PC-3 (cell line): ENCODE measurements at regions of chr14 and their contacts with region 1.

Region 1: DNA sequence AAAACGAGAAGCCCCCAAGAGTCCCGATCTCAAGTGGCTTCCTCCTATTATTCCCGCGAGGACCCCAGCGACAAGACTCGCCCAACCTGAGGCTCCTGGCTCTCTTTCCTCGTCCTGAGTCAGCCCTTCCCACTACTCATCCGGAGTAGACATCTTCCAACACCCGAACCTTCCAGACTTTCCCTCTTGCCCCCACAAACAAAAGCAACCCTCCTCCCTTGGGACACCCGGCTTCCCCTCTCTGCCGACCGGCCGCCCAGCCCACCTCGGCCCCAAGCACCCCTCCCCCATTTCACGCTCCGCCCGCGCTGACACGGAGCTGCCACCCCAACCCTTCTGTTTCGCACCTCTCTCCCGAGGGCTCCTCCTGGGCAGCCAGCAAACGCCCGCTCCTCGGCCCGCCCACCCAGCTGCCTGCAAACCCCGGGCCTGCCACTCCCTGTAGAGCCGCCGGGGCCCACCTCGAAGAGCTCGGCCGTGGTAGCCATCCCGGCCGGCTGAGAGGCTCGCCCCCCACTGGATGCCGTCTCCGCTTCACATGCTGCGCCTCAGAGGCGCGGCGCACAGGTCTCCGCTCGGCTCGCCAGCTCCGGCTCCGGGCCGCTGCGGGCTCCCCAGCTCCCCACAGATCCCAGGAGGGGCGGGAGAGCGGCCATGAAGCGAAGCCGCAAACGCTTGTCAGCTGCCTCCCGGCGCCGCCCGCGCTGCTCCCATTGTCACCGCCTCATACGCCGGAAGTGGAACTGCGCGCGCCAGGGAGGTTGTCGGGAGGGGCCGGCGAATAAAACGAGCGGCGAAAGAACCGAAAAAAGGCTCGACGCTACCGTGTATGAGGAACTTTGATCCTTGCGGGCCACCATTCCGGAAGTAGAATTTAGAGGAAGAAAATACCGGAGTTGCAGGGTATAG is at the starts of genes AP5M1 and EXOC5:
- DNase-seq: peak; percentile 100
- ATAC-seq: peak; percentile 81
- H3K4me3 ChIP-seq: peak within 1 kb of the TSS; percentile 77
- H3K27ac ChIP-seq: peak within 1 kb of the TSS; percentile 73
- H3K4me1 ChIP-seq: peaks cover 40% of the 10 kb centered on the region
- H3K27me3 ChIP-seq: no peaks in the 10 kb centered on the region
- CTCF ChIP-seq: peak; percentile 21; the same call in 1 of the 2 replicates
- total RNA-seq, gene AP5M1: 41.3 and 48.7 TPM in 2 replicates
- total RNA-seq, gene EXOC5: 109 TPM in 2 replicates

Region 2: DNA sequence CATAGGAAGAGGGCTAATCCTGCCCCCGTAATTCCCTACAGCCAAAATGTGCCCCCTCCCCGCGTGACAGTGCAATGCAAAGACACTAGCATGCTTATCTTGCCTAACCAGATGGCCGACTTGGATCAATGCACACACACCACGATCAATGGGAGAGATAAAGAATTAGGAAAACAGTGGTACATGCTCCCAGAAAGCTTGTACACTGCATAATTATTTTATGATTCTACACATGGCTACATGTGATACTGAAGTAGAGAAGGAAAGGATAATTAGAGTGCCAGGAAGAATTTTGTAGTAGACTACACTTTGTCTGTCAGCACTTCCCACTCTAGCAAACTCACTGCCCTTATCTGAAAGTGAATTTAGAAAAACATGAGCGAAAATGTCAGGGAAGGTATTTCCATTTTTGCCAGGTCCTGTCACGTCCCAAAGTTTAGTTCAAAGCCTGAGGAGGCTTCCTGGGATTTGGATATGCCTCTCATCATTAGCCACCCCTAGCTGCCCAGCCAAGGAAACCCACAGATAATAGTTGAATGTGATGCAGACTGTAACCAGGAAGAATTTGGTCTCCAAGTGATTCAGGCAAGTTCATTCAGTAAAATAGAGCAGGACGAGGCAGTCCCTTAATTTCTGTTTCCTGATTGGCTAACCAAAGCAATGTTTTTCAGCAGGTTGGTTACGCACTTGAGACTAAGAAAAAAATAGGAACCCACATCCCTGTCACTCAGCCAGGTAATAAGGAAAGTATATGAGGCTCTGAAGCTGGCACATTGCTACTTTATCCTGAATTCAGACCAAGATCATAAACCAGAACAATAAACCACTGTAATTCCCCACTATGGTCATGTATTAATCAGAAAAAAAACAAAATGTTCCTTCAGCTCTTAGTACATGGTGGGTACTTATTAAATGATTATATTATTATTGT is 258.6 kb before region 1 on chr14:
- CTCF ChIA-PET with region 1: no interaction called
- POLR2A ChIA-PET with region 1: no interaction called
- intact Hi-C with region 1: no loop called
- DNase-seq: no peak
- ATAC-seq: no peak
- H3K4me3 ChIP-seq: no peak overlapping the region
- H3K27ac ChIP-seq: no peak overlapping the region
- H3K4me1 ChIP-seq: no peaks in the 10 kb centered on the region
- H3K27me3 ChIP-seq: peaks cover 59% of the 10 kb centered on the region
- CTCF ChIP-seq: no peak

Region 3: DNA sequence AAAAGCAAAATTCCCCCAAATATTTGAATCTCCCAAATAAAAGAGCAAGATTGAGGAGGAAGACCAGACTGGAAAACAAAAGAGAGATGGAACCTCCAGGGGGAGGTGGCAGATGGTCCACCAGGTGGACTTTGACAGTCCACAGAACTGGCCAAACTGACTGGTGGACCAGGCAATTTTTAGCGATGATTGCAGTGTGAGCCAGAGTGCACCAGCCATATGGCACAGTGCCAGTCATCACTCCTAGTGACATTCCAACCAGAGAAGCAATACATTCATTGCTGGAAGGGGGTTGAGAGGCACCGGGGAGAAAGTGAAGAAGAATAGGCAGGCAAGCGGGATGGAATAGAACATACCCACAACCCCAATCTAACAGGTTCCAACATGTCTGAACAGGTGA is 182.6 kb before region 1 on chr14:
- CTCF ChIA-PET with region 1: no interaction called
- POLR2A ChIA-PET with region 1: no interaction called
- intact Hi-C with region 1: no loop called
- DNase-seq: no peak
- ATAC-seq: no peak
- H3K4me3 ChIP-seq: no peak overlapping the region
- H3K27ac ChIP-seq: no peak overlapping the region
- H3K4me1 ChIP-seq: no peaks in the 10 kb centered on the region
- H3K27me3 ChIP-seq: peaks cover 93% of the 10 kb centered on the region
- CTCF ChIP-seq: no peak

Region 4: DNA sequence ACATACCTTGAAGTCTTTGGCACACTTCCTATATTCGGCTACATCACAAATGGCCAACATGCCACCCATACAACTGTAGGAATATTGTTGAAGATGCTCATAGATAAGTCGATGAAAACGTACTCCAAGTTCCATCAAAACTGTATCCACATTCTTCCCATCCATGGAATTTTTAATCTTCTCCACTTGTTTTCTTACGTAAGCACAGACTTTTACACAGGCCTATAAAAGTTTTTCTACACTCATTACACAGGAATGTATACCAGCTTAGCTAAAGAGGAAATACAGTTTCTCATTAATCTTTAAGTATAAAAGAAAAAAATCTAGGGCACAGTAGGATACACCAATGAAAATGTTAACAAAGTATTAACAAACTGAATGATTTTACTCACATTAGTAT is 58.9 kb before region 1 on chr14:
- CTCF ChIA-PET with region 1: no interaction called
- POLR2A ChIA-PET with region 1: no interaction called
- intact Hi-C with region 1: loop called (anchors 2 kb)
- DNase-seq: peak; percentile 73
- ATAC-seq: peak; percentile 97
- H3K4me3 ChIP-seq: no peak overlapping the region
- H3K27ac ChIP-seq: no peak overlapping the region
- H3K4me1 ChIP-seq: peaks cover 3% of the 10 kb centered on the region; the same call in 1 of the 2 replicates
- H3K27me3 ChIP-seq: no peaks in the 10 kb centered on the region
- CTCF ChIP-seq: no peak

Region 5: DNA sequence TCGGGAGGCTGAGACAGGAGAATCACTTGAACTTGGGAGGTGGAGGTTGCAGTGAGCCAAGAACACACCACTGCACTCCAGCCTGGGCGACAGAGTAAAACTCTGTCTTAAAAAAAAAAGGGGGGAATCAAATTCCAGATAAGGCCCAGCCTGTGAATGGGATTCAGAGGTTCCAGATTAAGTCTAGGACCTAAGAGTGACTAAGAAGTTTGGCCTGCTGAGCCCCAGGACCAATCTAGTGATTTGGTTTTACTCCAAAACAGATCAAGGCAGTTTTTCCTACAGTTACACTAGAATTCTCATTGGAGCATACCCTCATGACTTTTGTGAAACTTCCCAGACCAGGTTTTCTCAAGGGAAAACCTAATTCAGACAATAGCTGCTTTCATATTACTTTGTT is 22.5 kb before region 1 on chr14:
- CTCF ChIA-PET with region 1: no interaction called
- POLR2A ChIA-PET with region 1: interaction called, 4 read pairs
- intact Hi-C with region 1: loop called (anchors 1 kb)
- DNase-seq: no peak
- ATAC-seq: no peak
- H3K4me3 ChIP-seq: no peak overlapping the region
- H3K27ac ChIP-seq: no peak overlapping the region
- H3K4me1 ChIP-seq: no peaks in the 10 kb centered on the region
- H3K27me3 ChIP-seq: no peaks in the 10 kb centered on the region
- CTCF ChIP-seq: no peak

Region 6: GRCh38 chr14:57317316-57317715 is 48.9 kb after region 1 on chr14:
- CTCF ChIA-PET with region 1: no interaction called
- POLR2A ChIA-PET with region 1: no interaction called
- intact Hi-C with region 1: loop called (anchors 2 kb)
- DNase-seq: peak; percentile 99
- ATAC-seq: peak; percentile 89
- H3K4me3 ChIP-seq: no peak overlapping the region
- H3K27ac ChIP-seq: no peak overlapping the region
- H3K4me1 ChIP-seq: no peaks in the 10 kb centered on the region
- H3K27me3 ChIP-seq: peaks cover 44% of the 10 kb centered on the region
- CTCF ChIP-seq: peak; percentile 100

Region 7: GRCh38 chr14:57390028-57390805 is 121.8 kb after region 1 on chr14 and contains the start of gene NAA30:
- CTCF ChIA-PET with region 1: no interaction called
- POLR2A ChIA-PET with region 1: no interaction called
- intact Hi-C with region 1: loop called (anchors 2 kb)
- DNase-seq: peak; percentile 100
- ATAC-seq: peak; percentile 83
- H3K4me3 ChIP-seq: peak within 1 kb of the TSS; percentile 77
- H3K27ac ChIP-seq: peak within 1 kb of the TSS; percentile 68
- H3K4me1 ChIP-seq: peaks cover 31% of the 10 kb centered on the region
- H3K27me3 ChIP-seq: no peaks in the 10 kb centered on the region
- CTCF ChIP-seq: no peak; the same call in 1 of the 2 replicates
- total RNA-seq, gene NAA30: 23.2 and 31.2 TPM in 2 replicates